Activated CD8-positive, alpha-beta T cell treated with anti-CD3 and anti-CD28 coated beads for 36 hours (primary cell): ENCODE measurements at regions of chr9 and their contacts with region 1.

Region 1: GRCh38 chr9:132669698-132670456 is at the start of gene DDX31:
- DNase-seq: peak; percentile 87
- ATAC-seq: peak; percentile 82
- H3K4me3 Mint-ChIP-seq: peak within 1 kb of the TSS; percentile 88
- H3K27ac Mint-ChIP-seq: peak within 1 kb of the TSS; percentile 92
- H3K4me1 Mint-ChIP-seq: peaks cover 47% of the 10 kb centered on the region
- H3K27me3 Mint-ChIP-seq: no peaks in the 10 kb centered on the region
- CTCF ChIP-seq: no peak
- total RNA-seq, gene DDX31: 20.9 to 22.8 TPM

Region 2: GRCh38 chr9:132679946-132680625 is 10.2 kb after region 1 on chr9:
- CTCF ChIA-PET with region 1: no interaction called
- POLR2A ChIA-PET with region 1: interaction called, 13 read pairs
- intact Hi-C with region 1: no loop called
- DNase-seq: no peak
- ATAC-seq: peak; percentile 91
- H3K4me3 Mint-ChIP-seq: no peak overlapping the region
- H3K27ac Mint-ChIP-seq: peak overlapping the region; percentile 12
- H3K4me1 Mint-ChIP-seq: peaks cover 40% of the 10 kb centered on the region
- H3K27me3 Mint-ChIP-seq: no peaks in the 10 kb centered on the region
- CTCF ChIP-seq: no peak

Region 3: GRCh38 chr9:132717326-132717945 is 47.6 kb after region 1 on chr9:
- CTCF ChIA-PET with region 1: no interaction called
- POLR2A ChIA-PET with region 1: no interaction called
- intact Hi-C with region 1: no loop called
- DNase-seq: no peak
- ATAC-seq: no peak
- H3K4me3 Mint-ChIP-seq: no peak overlapping the region
- H3K27ac Mint-ChIP-seq: no peak overlapping the region
- H3K4me1 Mint-ChIP-seq: no peaks in the 10 kb centered on the region
- H3K27me3 Mint-ChIP-seq: peaks cover 19% of the 10 kb centered on the region
- CTCF ChIP-seq: no peak

Region 4: DNA sequence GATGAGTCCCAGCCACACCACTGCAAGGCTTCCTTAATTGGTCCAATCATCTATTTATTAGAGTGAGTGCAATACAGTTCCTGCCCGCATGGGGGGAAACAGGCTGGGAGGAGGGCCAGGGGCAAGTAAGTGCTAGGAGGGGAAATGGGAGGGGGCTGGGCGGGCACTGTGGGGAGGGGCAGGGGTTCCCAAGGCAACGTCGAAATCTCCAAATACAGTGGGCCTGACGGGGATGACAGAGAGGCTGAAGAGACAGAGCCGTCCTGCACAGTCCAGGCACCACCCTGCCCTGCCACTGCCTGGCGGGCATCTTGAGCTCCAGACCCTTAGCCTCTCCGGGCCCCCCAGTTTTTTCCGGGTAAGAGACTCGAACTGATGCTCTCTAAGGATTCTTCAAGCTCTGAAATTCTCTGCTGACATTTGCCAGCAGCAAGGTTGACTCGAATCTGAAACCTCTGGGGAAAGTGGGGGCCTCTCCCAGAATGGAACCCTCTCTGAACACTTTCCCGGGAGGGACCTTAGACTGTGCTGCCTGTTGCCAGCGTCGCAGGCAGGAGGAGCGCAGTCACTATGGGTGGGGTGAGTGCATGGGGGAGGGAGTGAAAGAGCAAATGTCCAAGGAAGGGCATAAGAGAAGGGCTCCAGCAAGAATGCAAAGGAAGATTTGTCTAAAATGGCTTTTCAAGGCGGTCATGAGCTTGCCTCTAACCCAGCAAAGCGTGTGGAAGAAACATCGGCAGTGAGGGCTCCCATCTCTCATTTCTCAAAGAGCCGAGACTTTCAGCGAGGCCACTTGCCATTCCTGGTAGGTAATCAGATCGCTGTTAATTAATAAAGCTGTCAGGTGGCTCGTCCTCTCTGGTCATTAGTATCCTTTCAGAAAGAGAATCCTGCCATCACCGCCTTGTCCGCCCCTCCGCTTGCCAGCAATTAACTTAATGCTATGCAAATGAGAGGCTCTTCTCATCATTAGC is 99.3 kb after region 1 on chr9:
- CTCF ChIA-PET with region 1: interaction called, 12 read pairs
- POLR2A ChIA-PET with region 1: interaction called, 21 read pairs
- intact Hi-C with region 1: no loop called
- DNase-seq: peak; percentile 86
- ATAC-seq: peak; percentile 77
- H3K4me3 Mint-ChIP-seq: peak overlapping the region; percentile 91
- H3K27ac Mint-ChIP-seq: peak overlapping the region; percentile 97
- H3K4me1 Mint-ChIP-seq: peaks cover 17% of the 10 kb centered on the region
- H3K27me3 Mint-ChIP-seq: no peaks in the 10 kb centered on the region
- CTCF ChIP-seq: peak; percentile 75